H1 (cell line): ENCODE measurements at regions of chr18 and their contacts with region 1.

Region 1: DNA sequence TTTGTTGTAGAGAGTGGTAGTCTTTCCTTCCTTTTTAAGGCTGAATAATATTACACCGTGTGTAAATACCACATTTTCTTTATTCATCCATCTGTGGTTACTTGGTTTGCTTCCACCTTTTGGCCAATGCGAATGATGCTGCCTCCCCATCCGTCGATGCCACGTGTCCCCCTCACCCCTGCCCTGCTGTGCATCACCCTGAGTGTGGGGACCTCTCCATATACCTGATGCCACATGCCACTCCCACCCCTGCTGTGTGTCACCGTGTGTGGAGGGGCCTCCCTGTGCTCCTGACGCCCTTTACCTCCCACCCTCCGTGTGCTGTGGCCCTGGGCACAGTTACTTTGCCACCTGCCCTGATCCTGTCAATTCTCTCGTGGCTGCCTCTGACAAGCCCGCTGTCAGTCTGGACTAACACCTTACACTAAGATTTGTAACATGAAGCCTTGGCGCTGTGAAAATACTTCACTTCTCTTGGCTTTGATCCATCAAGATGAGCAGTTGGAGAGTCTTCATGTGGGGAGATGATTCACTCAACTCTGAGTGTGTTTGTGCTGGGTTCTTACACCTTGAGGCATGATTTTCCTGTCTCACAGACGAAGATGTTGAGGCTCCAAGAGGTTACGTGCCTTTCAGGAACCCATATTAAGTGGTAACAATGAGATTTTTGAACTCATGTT is 234.0 kb downstream of the ZNF407 start:
- DNase-seq: no peak
- H3K4me3 ChIP-seq: no peak overlapping the region
- H3K27ac ChIP-seq: no peak overlapping the region
- H3K4me1 ChIP-seq: peaks cover 0 to 5% (median 2%) of the 10 kb centered on the region in 4 experiments; a peak in 4 of 7 replicates
- H3K27me3 ChIP-seq: no peaks in the 10 kb centered on the region
- CTCF ChIP-seq: no peak
- EP300 ChIP-seq: no peak
- POLR2A ChIP-seq: no peak
- RAD21 ChIP-seq: no peak

Region 2: DNA sequence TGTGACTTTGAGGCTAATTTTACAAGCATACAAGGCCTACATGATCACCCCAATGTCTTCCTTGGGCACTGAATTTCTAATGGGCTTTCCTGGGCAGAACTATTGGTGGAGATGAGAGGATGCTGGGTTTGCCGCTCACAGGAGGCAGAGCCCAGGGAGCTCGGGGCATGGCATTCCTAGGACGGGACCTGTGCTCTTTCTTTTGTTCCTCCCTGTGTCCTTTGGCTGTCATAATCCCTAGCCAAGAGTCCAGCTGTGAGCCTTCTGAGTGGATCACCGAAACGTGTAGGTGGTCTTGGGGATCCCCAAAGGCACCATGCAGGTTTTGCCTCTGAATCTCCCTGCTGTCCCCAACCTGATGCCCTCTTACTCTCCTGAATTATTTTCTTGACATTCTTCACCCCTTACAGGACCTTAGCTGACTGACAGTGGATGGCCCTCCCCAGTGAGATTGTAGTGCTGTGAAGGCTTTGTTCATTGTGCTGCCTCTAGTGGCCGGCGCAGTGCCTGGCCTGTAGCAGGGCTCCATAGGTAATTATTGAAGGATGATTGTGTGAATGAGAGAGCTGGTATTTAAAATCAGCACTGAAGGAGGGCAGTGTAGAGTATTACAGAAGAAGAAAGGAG is 12.2 kb before region 1 on chr18:
- CTCF ChIA-PET with region 1: interaction called, 17 read pairs
- POLR2A ChIA-PET with region 1: interaction called, 5 read pairs
- DNase-seq: peak; percentile 70 to 75
- H3K4me3 ChIP-seq: peak overlapping the region in 1 of 4 experiments; percentile 39; a peak in 2 of 8 replicates
- H3K27ac ChIP-seq: peak overlapping the region; percentile 76; the same call in 1 of the 2 replicates
- H3K4me1 ChIP-seq: peaks cover 3 to 15% (median 10%) of the 10 kb centered on the region in 4 experiments; a peak in 6 of 7 replicates
- H3K27me3 ChIP-seq: no peaks in the 10 kb centered on the region
- CTCF ChIP-seq: peak; percentile 72 to 95 (median 87)
- EP300 ChIP-seq: no peak
- POLR2A ChIP-seq: no peak
- RAD21 ChIP-seq: peak; percentile 61 to 69